MCF 10A (cell line): ENCODE measurements at regions of chr12 and their contacts with region 1.

Region 1: DNA sequence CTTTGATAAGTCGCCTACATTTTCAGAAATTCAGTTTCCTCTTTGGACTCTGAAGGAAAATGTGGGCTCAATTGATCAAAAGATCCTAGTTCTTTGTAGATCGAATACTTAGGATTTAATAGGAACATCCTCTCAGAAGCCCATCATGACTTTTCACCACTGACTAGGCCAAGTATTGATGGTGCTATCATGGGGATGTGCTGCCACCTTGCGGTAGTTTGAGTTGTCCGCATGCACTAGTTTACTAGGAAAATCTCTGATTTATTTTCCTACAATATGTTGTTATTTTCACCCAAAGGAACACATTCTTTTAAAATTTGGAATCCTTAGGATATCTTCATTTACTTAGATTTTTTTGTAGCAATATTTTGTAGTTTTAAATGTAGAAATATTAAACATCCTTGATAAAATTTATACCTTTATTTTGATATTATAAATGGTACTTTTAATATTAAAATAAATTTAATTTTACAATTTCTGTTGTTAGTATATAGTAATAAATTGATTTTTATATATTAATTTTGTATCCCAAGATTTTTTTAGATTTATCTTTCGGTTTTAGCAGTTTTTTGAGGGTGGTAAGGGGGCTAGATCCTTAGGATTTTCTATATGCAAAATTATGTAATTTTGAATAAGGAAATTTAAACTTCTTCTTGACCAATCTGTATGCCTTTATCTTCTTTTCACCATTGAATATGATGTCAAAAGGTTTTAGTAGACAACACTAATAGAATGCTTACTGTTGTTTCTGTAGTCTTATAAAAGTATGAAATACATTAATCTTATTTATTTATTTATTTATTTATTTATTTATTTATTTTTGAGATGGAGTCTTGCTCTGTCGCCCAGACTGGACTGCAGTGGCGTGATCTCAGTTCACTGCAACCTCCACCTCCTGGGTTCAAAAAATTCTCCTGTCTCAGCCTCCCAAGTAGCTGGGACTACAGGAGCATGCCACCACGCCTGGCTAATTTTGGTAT is 52.9 kb upstream of the OR9K2 start:
- DNase-seq: peak; percentile 78
- H3K4me3 Mint-ChIP-seq: no peak overlapping the region
- H3K27ac Mint-ChIP-seq: no peak overlapping the region
- H3K4me1 Mint-ChIP-seq: no peaks in the 10 kb centered on the region
- H3K27me3 Mint-ChIP-seq: peaks cover 45% of the 10 kb centered on the region
- CTCF ChIP-seq: peak; percentile 73

Region 2: GRCh38 chr12:54596526-54596946 is 476.8 kb before region 1 on chr12:
- CTCF ChIA-PET with region 1: interaction called, 3 read pairs
- POLR2A ChIA-PET with region 1: no interaction called
- intact Hi-C with region 1: loop called (anchors 5 kb)
- DNase-seq: peak; percentile 80
- H3K4me3 Mint-ChIP-seq: no peak overlapping the region
- H3K27ac Mint-ChIP-seq: no peak overlapping the region
- H3K4me1 Mint-ChIP-seq: no peaks in the 10 kb centered on the region
- H3K27me3 Mint-ChIP-seq: peaks cover 27% of the 10 kb centered on the region
- CTCF ChIP-seq: peak; percentile 68

Region 3: DNA sequence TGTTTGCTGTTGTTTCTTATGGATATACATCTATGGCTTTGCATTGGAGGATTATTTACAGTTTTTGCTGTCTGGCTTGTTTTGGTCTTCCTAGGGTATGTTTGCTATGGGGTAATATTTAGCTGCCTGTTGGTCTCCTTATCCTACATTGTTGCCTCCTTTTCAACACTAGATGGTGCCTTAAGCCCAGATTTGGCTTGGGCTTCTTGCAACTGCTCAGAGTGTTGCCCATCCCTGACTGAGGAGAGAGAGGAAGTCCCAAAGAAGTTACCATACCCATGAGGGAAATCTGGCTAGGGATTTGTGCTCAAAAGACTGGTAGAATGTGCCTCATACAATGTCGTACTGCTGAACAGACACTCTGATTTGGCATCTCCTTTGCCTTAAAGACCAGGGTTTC is 313.6 kb before region 1 on chr12:
- CTCF ChIA-PET with region 1: interaction called, 6 read pairs
- POLR2A ChIA-PET with region 1: no interaction called
- intact Hi-C with region 1: loop called (anchors 1 kb)
- DNase-seq: peak; percentile 69
- H3K4me3 Mint-ChIP-seq: no peak overlapping the region
- H3K27ac Mint-ChIP-seq: no peak overlapping the region
- H3K4me1 Mint-ChIP-seq: no peaks in the 10 kb centered on the region
- H3K27me3 Mint-ChIP-seq: peaks cover 55% of the 10 kb centered on the region
- CTCF ChIP-seq: peak; percentile 60

Region 4: DNA sequence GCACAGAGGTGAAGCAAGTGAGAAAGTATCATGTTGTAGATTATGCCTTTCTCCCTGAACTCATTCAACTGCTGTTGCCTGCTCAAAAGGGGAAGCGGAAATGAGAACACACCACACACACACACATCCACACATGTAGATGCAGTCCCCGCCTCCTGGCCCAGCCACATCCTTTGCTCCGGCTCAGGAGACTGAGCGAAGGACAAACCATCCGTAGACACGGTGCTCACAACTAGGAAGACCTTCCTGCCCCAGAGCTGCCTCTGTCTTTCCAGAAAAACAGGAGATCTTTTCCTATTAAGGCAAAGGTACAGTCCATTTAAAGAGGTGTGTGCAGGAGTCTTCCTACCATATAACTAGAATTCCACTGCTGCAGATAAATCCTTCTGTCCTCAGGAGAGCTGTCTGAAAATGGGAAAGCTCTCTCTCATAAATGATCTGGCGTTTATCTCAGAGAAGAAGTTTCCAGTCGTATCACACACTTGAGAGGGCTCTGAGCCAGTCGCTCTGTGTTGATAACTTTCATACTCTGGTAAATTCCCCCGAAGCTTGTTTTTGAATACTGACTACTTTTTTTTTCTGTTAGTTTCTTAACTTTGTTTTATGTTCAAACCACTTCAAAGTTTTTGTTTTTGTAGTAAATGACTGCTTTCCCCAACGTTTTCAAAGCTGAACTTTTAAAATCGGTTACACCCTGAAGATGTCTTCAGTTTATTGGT is 88.5 kb before region 1 on chr12 and contains the start of gene TESPA1:
- CTCF ChIA-PET with region 1: interaction called, 11 read pairs
- POLR2A ChIA-PET with region 1: no interaction called
- intact Hi-C with region 1: no loop called
- DNase-seq: no peak
- H3K4me3 Mint-ChIP-seq: no peak within 1 kb of the TSS
- H3K27ac Mint-ChIP-seq: no peak within 1 kb of the TSS
- H3K4me1 Mint-ChIP-seq: no peaks in the 10 kb centered on the region
- H3K27me3 Mint-ChIP-seq: peaks cover 77% of the 10 kb centered on the region
- CTCF ChIP-seq: no peak
- total RNA-seq, gene TESPA1: not detected in 2 replicates

Region 5: GRCh38 chr12:55043542-55043941 is 29.8 kb before region 1 on chr12:
- CTCF ChIA-PET with region 1: interaction called, 15 read pairs
- POLR2A ChIA-PET with region 1: no interaction called
- intact Hi-C with region 1: no loop called
- DNase-seq: no peak
- H3K4me3 Mint-ChIP-seq: no peak overlapping the region
- H3K27ac Mint-ChIP-seq: no peak overlapping the region
- H3K4me1 Mint-ChIP-seq: no peaks in the 10 kb centered on the region
- H3K27me3 Mint-ChIP-seq: peaks cover 72% of the 10 kb centered on the region
- CTCF ChIP-seq: no peak

Region 6: DNA sequence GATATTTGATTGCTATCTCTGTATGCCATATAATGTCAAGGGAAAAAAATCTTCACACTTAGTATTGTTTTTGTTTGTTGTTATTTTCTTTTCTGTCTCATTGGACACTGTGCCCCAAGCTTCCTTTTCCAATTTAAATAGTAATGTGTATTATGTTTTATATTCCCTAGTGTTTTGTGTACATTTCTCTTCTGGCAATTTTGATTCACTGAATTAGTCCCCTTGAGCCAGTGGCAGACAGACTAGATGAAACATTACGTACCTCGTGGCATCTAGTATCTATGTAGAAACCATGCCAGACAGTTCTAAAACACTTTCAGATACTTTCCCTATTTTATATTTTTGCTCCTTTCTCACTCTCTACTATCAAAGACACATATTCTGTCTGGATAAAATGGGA is 240.7 kb after region 1 on chr12 and contains the start of gene OR6C1:
- CTCF ChIA-PET with region 1: no interaction called
- POLR2A ChIA-PET with region 1: no interaction called
- intact Hi-C with region 1: no loop called
- DNase-seq: no peak
- H3K4me3 Mint-ChIP-seq: no peak within 1 kb of the TSS
- H3K27ac Mint-ChIP-seq: no peak within 1 kb of the TSS
- H3K4me1 Mint-ChIP-seq: no peaks in the 10 kb centered on the region
- H3K27me3 Mint-ChIP-seq: peaks cover 65% of the 10 kb centered on the region
- CTCF ChIP-seq: no peak
- total RNA-seq, gene OR6C1: not detected in 2 replicates

Region 7: GRCh38 chr12:55619354-55620138 is 546.2 kb after region 1 on chr12:
- CTCF ChIA-PET with region 1: interaction called, 3 read pairs
- POLR2A ChIA-PET with region 1: no interaction called
- intact Hi-C with region 1: loop called (anchors 5 kb)
- DNase-seq: peak; percentile 92
- H3K4me3 Mint-ChIP-seq: no peak overlapping the region
- H3K27ac Mint-ChIP-seq: no peak overlapping the region
- H3K4me1 Mint-ChIP-seq: no peaks in the 10 kb centered on the region
- H3K27me3 Mint-ChIP-seq: peaks cover 79% of the 10 kb centered on the region
- CTCF ChIP-seq: peak; percentile 69